MCF 10A (cell line): ENCODE measurements at regions of chr9 and their contacts with region 1.

Region 1: GRCh38 chr9:35954942-35955546 is 2.9 kb downstream of the OR2S2 start:
- DNase-seq: peak; percentile 72
- H3K4me3 Mint-ChIP-seq: no peak overlapping the region
- H3K27ac Mint-ChIP-seq: no peak overlapping the region
- H3K4me1 Mint-ChIP-seq: peaks cover 7% of the 10 kb centered on the region
- H3K27me3 Mint-ChIP-seq: peaks cover 31% of the 10 kb centered on the region
- CTCF ChIP-seq: peak; percentile 83

Region 2: DNA sequence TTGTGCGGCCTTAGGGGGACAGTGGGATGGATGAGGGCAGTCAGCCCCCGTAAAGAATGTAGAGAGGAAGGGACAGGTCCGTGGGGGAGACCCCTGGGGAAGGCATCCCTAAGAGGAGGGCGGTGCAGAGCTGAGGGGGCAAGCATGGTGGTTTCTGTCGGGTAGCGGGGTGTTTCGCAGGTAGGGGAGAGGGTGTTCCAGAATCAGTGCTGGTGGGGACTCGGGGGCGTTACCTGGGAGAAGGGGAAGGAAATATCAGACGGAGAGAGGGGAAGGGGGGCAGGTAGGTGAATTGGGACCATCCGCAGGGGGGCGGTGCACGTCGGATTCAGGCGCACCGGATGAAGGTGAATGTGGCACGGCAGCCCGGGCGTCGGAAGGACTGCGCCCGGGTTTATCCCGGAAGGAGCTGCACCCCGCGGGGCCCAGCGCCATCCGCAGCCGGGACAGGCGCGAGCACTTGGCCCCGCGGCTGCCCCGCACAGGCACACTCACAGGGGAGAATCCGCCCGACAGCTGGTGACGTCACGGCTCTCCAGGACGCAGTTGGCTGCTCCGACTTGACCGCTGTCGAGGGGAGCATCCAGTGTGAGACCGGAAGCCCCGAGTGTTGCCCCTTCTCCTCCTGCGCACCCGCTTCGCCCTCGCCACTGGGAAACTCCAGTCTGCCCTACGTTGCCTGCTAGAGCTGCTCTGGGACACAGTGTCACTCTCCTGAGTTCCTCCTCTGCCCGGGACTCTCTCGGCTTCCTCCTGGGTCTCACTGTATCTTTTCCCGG is 338.2 kb before region 1 on chr9:
- CTCF ChIA-PET with region 1: no interaction called
- POLR2A ChIA-PET with region 1: no interaction called
- intact Hi-C with region 1: no loop called
- DNase-seq: peak; percentile 3
- H3K4me3 Mint-ChIP-seq: peak overlapping the region; percentile 15
- H3K27ac Mint-ChIP-seq: no peak overlapping the region
- H3K4me1 Mint-ChIP-seq: no peaks in the 10 kb centered on the region
- H3K27me3 Mint-ChIP-seq: peaks cover 48% of the 10 kb centered on the region
- CTCF ChIP-seq: no peak

Region 3: DNA sequence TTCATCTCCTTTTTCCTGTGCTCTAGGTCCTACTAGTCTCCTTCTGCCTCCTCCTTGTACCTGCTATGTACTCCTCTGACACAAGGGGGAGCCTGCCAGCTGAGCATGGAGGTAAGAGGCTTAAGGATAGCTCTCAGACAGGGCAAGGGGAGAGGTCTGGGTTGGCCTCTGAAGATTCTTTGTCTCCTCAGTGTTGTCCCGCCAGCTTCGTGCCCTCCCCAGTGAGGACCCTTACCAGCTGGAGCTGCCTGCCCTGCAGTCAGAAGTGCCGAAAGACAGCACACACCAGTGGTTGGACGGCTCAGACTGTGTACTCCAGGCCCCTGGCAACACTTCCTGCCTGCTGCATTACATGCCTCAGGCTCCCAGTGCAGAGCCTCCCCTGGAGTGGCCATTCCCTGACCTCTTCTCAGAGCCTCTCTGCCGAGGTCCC is 218.8 kb before region 1 on chr9:
- CTCF ChIA-PET with region 1: no interaction called
- POLR2A ChIA-PET with region 1: no interaction called
- intact Hi-C with region 1: no loop called
- DNase-seq: peak; percentile 86
- H3K4me3 Mint-ChIP-seq: no peak overlapping the region
- H3K27ac Mint-ChIP-seq: no peak overlapping the region
- H3K4me1 Mint-ChIP-seq: peaks cover 10% of the 10 kb centered on the region
- H3K27me3 Mint-ChIP-seq: no peaks in the 10 kb centered on the region
- CTCF ChIP-seq: peak; percentile 75

Region 4: GRCh38 chr9:36023260-36024048 is 68.4 kb after region 1 on chr9:
- CTCF ChIA-PET with region 1: interaction called, 50 read pairs
- POLR2A ChIA-PET with region 1: interaction called, 4 read pairs
- intact Hi-C with region 1: loop called (anchors 1 kb)
- DNase-seq: peak; percentile 74
- H3K4me3 Mint-ChIP-seq: no peak overlapping the region
- H3K27ac Mint-ChIP-seq: no peak overlapping the region
- H3K4me1 Mint-ChIP-seq: peaks cover 6% of the 10 kb centered on the region
- H3K27me3 Mint-ChIP-seq: peaks cover 12% of the 10 kb centered on the region
- CTCF ChIP-seq: peak; percentile 84

Region 5: DNA sequence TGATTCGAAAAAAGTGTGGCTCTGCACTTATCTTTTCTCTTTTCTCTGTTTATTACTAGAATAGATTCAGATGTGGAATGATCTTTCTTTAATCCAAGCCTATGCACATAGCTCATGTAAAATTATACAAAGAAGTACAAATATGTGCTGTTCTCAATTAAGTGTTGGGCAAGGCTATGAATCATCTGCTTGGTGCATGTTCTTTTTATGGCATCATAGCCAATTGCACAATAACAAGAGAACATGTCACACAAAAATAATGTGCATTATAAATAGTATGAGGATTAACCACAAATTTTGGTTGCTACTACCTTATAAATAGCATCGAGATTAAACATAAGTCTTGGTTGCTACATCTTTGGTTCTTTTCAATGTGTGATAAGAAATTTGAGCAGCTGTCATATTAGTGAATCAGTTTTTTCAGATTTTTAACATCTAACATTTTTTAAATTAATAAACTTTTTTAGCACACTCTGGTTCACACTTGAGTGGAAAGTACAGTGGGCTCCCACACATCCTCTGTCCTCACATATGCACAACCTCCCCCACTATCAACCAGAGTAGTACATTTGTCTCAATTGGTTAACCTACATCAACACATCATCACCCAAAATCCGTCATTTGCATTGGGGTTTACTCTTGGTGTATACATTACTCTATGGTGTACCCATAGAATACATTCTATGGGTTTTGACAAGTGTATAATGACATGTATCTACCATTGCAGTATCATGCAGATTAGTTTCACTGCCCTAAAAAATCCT is 74.9 kb after region 1 on chr9:
- CTCF ChIA-PET with region 1: interaction called, 50 read pairs
- POLR2A ChIA-PET with region 1: interaction called, 3 read pairs
- intact Hi-C with region 1: no loop called
- DNase-seq: peak; percentile 94
- H3K4me3 Mint-ChIP-seq: no peak overlapping the region
- H3K27ac Mint-ChIP-seq: peak overlapping the region; percentile 83
- H3K4me1 Mint-ChIP-seq: peaks cover 19% of the 10 kb centered on the region
- H3K27me3 Mint-ChIP-seq: peaks cover 19% of the 10 kb centered on the region
- CTCF ChIP-seq: no peak